Right ventricle myocardium inferior (tissue), 1 donor: ENCODE measurements at regions of chr17 and their contacts with region 1.

Region 1: GRCh38 chr17:77109764-77110359 is 30.9 kb upstream of the SEC14L1 start:
- DNase-seq: no peak
- ATAC-seq: peak; percentile 59

Region 2: DNA sequence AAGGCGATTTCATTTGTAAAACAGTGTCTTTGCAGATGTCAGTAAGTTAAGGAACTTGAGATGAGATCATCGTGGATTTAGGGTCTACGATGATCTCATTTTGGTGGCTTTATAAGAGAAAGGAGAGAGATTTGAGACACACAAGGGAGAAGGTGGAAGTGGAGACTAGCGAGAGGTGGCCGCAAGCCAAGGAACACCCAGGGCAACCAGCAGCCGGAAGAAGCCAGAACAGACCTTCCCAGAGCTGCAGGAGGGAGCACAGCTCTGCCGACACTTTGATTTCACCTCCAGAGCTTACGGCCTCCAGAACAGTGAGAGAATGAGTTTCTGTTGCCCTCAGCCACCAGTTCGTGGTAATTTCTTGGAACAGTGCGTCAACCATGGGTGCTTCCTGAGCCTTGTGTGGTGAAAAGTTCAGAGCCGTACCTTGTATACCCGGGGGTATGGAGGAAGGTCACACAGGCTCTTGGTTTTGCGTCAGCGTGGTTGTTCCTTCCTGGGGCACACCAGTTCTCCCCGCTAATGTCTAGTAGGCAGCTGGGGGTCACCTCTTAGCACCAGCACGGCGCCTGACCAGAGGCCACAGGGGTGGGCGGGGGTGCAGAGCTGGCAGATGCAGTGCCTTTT is 18.0 kb after region 1 on chr17:
- intact Hi-C with region 1: loop called (anchors 2 kb)
- DNase-seq: peak; percentile 91
- ATAC-seq: peak; percentile 71

Region 3: GRCh38 chr17:77322514-77323412 is 212.9 kb after region 1 on chr17:
- intact Hi-C with region 1: no loop called
- DNase-seq: peak; percentile 91
- ATAC-seq: peak; percentile 58